CD4-positive, alpha-beta T cell (primary cell): ENCODE measurements at regions of chr11 and their contacts with region 1.

Region 1: DNA sequence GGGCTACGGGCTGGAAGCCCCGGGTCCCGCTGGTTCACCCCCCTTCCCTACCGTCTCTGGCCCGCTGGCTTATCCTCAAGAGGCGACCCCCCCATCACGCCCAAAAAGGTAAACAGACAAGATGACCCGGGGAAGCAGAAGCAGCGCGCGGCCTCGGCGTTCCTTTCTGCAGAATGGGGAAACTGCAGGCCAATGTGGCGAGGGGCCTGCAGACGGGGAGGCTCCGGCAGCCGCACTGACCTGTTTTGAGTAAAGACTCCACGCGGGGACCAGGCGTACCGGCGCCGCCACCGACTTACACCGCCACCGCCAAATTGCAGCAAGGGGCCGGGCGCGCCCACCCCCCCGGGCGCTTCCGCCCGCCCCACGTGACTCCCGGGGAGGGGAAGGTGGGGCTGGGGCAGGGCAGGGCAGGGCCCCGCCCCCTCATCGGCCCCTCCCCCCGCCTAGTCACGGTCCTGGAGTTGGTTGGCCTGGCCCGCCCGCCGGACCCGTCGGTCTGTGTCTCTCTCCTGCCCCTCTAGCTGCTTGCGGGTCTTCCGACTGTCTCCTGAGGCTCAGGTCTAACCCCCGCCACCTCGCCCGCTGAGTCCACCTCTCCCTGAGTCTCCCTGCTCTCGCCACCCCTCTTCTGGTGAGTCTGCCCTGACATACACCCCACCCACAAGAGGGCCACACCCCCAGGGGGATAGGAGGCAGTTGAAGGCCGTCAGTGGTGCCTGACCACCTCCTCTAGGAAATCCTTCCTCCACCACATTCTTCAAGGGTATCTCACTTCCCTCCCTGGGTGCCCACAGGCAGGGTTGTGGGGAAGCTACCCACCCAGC is at the start of gene ARAP1:
- DNase-seq: peak; percentile 65 to 92 (median 80)
- ATAC-seq: peak; percentile 90
- H3K4me3 ChIP-seq: peak within 1 kb of the TSS; percentile 96
- H3K4me3 Mint-ChIP-seq: peak within 1 kb of the TSS; percentile 96
- H3K27ac ChIP-seq: peak within 1 kb of the TSS; percentile 45 to 53
- H3K27ac Mint-ChIP-seq: peak within 1 kb of the TSS; percentile 86
- H3K4me1 ChIP-seq: peaks cover 47% of the 10 kb centered on the region
- H3K4me1 Mint-ChIP-seq: peaks cover 57% of the 10 kb centered on the region
- H3K27me3 ChIP-seq: no peaks in the 10 kb centered on the region
- H3K27me3 Mint-ChIP-seq: no peaks in the 10 kb centered on the region
- CTCF ChIP-seq: no peak
- total RNA-seq, gene ARAP1: 65.7 to 69.8 TPM

Region 2: GRCh38 chr11:72736452-72737069 is 15.7 kb before region 1 on chr11:
- CTCF ChIA-PET with region 1: no interaction called
- POLR2A ChIA-PET with region 1: no interaction called
- intact Hi-C with region 1: loop called in 1 of 2 experiments (anchors 1 kb)
- DNase-seq: peak; percentile 37 to 91 (median 59)
- ATAC-seq: peak; percentile 88
- H3K4me3 ChIP-seq: no peak overlapping the region
- H3K4me3 Mint-ChIP-seq: peak overlapping the region; percentile 36
- H3K27ac ChIP-seq: peak overlapping the region; percentile 51 to 83
- H3K27ac Mint-ChIP-seq: peak overlapping the region; percentile 95
- H3K4me1 ChIP-seq: peaks cover 59% of the 10 kb centered on the region
- H3K4me1 Mint-ChIP-seq: peaks cover 53% of the 10 kb centered on the region
- H3K27me3 ChIP-seq: no peaks in the 10 kb centered on the region
- H3K27me3 Mint-ChIP-seq: no peaks in the 10 kb centered on the region
- CTCF ChIP-seq: no peak

Region 3: DNA sequence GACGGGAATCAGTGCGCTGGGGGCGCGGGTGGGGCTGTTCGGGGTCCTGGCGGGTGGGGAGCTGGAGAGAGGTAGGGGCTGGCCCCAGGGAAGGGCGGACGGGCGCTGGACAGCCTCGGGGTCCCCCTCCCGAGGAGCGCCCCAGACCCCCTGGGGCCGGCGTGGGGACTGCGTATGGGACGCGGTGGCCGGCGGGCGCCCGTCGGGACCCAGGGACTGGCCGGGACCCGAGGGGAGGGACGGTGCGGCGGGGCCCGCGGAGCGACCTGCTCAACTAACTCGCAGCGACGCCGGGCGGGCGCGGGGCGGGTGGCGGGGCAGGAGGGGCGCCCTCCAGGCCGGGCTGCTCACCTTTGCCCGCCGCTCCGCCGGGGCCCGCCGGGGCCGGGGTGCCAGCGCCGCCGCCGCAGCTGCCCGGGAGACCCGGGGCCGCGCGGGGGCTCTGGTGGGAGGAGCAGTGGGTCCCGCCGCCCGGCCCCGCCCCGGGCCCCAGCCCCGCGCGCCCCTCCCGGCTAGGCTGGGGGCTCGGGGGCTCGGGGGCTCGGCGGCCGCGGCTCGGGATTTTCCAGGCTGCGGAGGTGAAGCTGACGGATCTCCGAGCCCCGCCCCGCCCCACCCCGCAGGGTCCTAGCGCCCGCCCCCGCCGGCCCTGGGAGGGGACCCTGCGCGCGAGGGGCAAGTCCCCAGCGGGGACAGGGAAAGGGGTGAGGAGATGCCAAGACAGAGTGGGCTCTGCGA is 29.2 kb after region 1 on chr11:
- CTCF ChIA-PET with region 1: no interaction called
- POLR2A ChIA-PET with region 1: no interaction called
- intact Hi-C with region 1: loop called in 1 of 2 experiments (anchors 2 kb)
- DNase-seq: peak; percentile 22 to 87 (median 50)
- ATAC-seq: peak; percentile 81
- H3K4me3 ChIP-seq: peak overlapping the region; percentile 55
- H3K4me3 Mint-ChIP-seq: peak overlapping the region; percentile 90
- H3K27ac ChIP-seq: peak overlapping the region in 1 of 2 donors; percentile 17
- H3K27ac Mint-ChIP-seq: peak overlapping the region; percentile 45
- H3K4me1 ChIP-seq: peaks cover 45% of the 10 kb centered on the region
- H3K4me1 Mint-ChIP-seq: peaks cover 24% of the 10 kb centered on the region
- H3K27me3 ChIP-seq: no peaks in the 10 kb centered on the region
- H3K27me3 Mint-ChIP-seq: no peaks in the 10 kb centered on the region
- CTCF ChIP-seq: no peak

Region 4: GRCh38 chr11:72814286-72815109 is 62.2 kb after region 1 on chr11 and contains the start of gene ATG16L2:
- CTCF ChIA-PET with region 1: no interaction called
- POLR2A ChIA-PET with region 1: no interaction called
- intact Hi-C with region 1: loop called in 1 of 2 experiments (anchors 1 kb)
- DNase-seq: peak in 13 of 14 experiments; percentile 78 to 95 (median 87)
- ATAC-seq: peak; percentile 81
- H3K4me3 ChIP-seq: peak within 1 kb of the TSS; percentile 96
- H3K4me3 Mint-ChIP-seq: peak within 1 kb of the TSS; percentile 99
- H3K27ac ChIP-seq: peak within 1 kb of the TSS; percentile 97 to 100
- H3K27ac Mint-ChIP-seq: peak within 1 kb of the TSS; percentile 97
- H3K4me1 ChIP-seq: peaks cover 38% of the 10 kb centered on the region
- H3K4me1 Mint-ChIP-seq: peaks cover 57% of the 10 kb centered on the region
- H3K27me3 ChIP-seq: no peaks in the 10 kb centered on the region
- H3K27me3 Mint-ChIP-seq: no peaks in the 10 kb centered on the region
- CTCF ChIP-seq: peak; percentile 29
- total RNA-seq, gene ATG16L2: 58.3 to 61.6 TPM